Psoas muscle (tissue), 8 donors: ENCODE measurements at regions of chr1 and their contacts with region 1.

Region 1: DNA sequence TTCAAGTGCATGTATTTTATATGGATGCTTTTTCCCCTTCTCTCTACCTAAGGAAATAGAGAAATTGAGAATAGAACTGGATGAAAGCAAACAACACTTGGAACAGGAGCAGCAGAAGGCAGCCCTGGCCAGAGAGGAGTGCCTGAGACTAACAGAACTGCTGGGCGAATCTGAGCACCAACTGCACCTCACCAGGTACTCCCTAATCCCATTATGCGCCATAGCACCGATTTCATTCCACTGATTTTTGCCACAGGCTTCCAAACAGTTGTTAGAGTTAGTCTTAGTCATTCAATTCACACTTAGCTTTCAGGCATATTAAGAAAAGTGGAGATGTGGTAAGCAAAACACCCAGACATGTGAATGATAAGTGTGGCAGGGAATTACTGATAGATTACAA is 122.8 kb downstream of the SDCCAG8 start:
- DNase-seq: no peak
- ATAC-seq: no peak
- H3K4me3 ChIP-seq: no peak overlapping the region
- H3K27ac ChIP-seq: no peak overlapping the region
- H3K4me1 ChIP-seq: peaks cover 4% of the 10 kb centered on the region
- H3K27me3 ChIP-seq: no peaks in the 10 kb centered on the region
- CTCF ChIP-seq: no peak

Region 2: GRCh38 chr1:243396876-243397275 is 18.2 kb after region 1 on chr1:
- intact Hi-C with region 1: loop called in 1 of 2 experiments (anchors 1 kb)
- DNase-seq: peak in 1 of 2 donors; percentile 21
- ATAC-seq: peak; percentile 94 to 98 (median 96)
- H3K4me3 ChIP-seq: peak overlapping the region; percentile 41
- H3K27ac ChIP-seq: peak overlapping the region; percentile 66
- H3K4me1 ChIP-seq: peaks cover 57% of the 10 kb centered on the region
- H3K27me3 ChIP-seq: no peaks in the 10 kb centered on the region
- CTCF ChIP-seq: no peak

Region 3: DNA sequence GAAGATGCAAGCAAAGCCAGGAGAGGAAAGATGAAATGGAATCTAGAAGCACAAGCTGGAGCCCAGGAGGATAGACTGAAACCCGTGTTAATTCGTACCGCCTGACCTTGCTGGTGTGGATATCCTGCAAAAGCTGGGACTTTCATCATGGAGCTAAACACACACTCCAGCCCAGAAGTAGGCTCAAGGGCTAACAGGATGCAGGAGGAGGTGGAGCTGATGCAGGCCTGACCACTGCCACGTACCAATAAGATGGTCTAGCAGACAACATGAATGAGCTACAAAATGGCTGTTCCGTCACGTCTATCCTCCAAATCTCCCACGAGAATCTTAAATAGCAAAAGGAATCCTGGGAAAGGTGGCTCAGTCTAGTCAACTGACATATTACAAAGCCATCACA is 147.5 kb after region 1 on chr1:
- intact Hi-C with region 1: no loop called
- DNase-seq: no peak
- ATAC-seq: no peak
- H3K4me3 ChIP-seq: no peak overlapping the region
- H3K27ac ChIP-seq: no peak overlapping the region
- H3K4me1 ChIP-seq: no peaks in the 10 kb centered on the region
- H3K27me3 ChIP-seq: no peaks in the 10 kb centered on the region
- CTCF ChIP-seq: no peak